B cell (primary cell): ENCODE measurements at regions of chr17 and their contacts with region 1.

Region 1: GRCh38 chr17:75289115-75289831 is at the start of gene SLC25A19:
- DNase-seq: peak; percentile 98
- ATAC-seq: peak; percentile 84
- H3K4me3 ChIP-seq: peak within 1 kb of the TSS; percentile 77 to 88 (median 85)
- H3K4me3 Mint-ChIP-seq: peak within 1 kb of the TSS; percentile 98
- H3K27ac ChIP-seq: peak within 1 kb of the TSS; percentile 90 to 98
- H3K27ac Mint-ChIP-seq: peak within 1 kb of the TSS; percentile 100
- H3K4me1 ChIP-seq: peaks cover 23 to 44% of the 10 kb centered on the region in 2 donors
- H3K4me1 Mint-ChIP-seq: peaks cover 37% of the 10 kb centered on the region
- H3K27me3 ChIP-seq: no peaks in the 10 kb centered on the region
- H3K27me3 Mint-ChIP-seq: no peaks in the 10 kb centered on the region
- CTCF ChIP-seq: no peak
- total RNA-seq, gene SLC25A19: 46.4 and 52.3 TPM in 2 replicates

Region 2: GRCh38 chr17:75313941-75314551 is 24.8 kb after region 1 on chr17:
- CTCF ChIA-PET with region 1: interaction called, 79 read pairs
- POLR2A ChIA-PET with region 1: interaction called, 25 read pairs
- intact Hi-C with region 1: no loop called
- DNase-seq: no peak
- ATAC-seq: no peak
- H3K4me3 ChIP-seq: no peak overlapping the region
- H3K4me3 Mint-ChIP-seq: peak overlapping the region; percentile 27
- H3K27ac ChIP-seq: peak overlapping the region; percentile 18 to 60
- H3K27ac Mint-ChIP-seq: peak overlapping the region; percentile 91
- H3K4me1 ChIP-seq: peaks cover 26 to 68% of the 10 kb centered on the region in 2 donors
- H3K4me1 Mint-ChIP-seq: peaks cover 52% of the 10 kb centered on the region
- H3K27me3 ChIP-seq: no peaks in the 10 kb centered on the region
- H3K27me3 Mint-ChIP-seq: no peaks in the 10 kb centered on the region
- CTCF ChIP-seq: no peak

Region 3: GRCh38 chr17:75393523-75394331 is 104.5 kb after region 1 on chr17:
- CTCF ChIA-PET with region 1: interaction called, 25 read pairs
- POLR2A ChIA-PET with region 1: interaction called, 13 read pairs
- intact Hi-C with region 1: no loop called
- DNase-seq: peak; percentile 94
- ATAC-seq: peak; percentile 95
- H3K4me3 ChIP-seq: peak overlapping the region; percentile 49 to 78 (median 63)
- H3K4me3 Mint-ChIP-seq: peak overlapping the region; percentile 86
- H3K27ac ChIP-seq: peak overlapping the region; percentile 17 to 79
- H3K27ac Mint-ChIP-seq: peak overlapping the region; percentile 79
- H3K4me1 ChIP-seq: peaks cover 68 to 76% of the 10 kb centered on the region in 2 donors
- H3K4me1 Mint-ChIP-seq: peaks cover 81% of the 10 kb centered on the region
- H3K27me3 ChIP-seq: no peaks in the 10 kb centered on the region
- H3K27me3 Mint-ChIP-seq: no peaks in the 10 kb centered on the region
- CTCF ChIP-seq: peak; percentile 12

Region 4: GRCh38 chr17:75412455-75413317 is 123.4 kb after region 1 on chr17:
- CTCF ChIA-PET with region 1: interaction called, 76 read pairs
- POLR2A ChIA-PET with region 1: interaction called, 8 read pairs
- intact Hi-C with region 1: loop called (anchors 1 kb)
- DNase-seq: peak; percentile 90
- ATAC-seq: peak; percentile 94
- H3K4me3 ChIP-seq: peak overlapping the region in 4 of 5 experiments; percentile 9 to 30 (median 23)
- H3K4me3 Mint-ChIP-seq: peak overlapping the region; percentile 68
- H3K27ac ChIP-seq: no peak overlapping the region
- H3K27ac Mint-ChIP-seq: peak overlapping the region; percentile 62
- H3K4me1 ChIP-seq: peaks cover 7 to 14% of the 10 kb centered on the region in 2 donors
- H3K4me1 Mint-ChIP-seq: peaks cover 13% of the 10 kb centered on the region
- H3K27me3 ChIP-seq: no peaks in the 10 kb centered on the region
- H3K27me3 Mint-ChIP-seq: no peaks in the 10 kb centered on the region
- CTCF ChIP-seq: peak; percentile 79

Region 5: GRCh38 chr17:75476271-75476671 is 187.0 kb after region 1 on chr17:
- CTCF ChIA-PET with region 1: no interaction called
- POLR2A ChIA-PET with region 1: no interaction called
- intact Hi-C with region 1: no loop called
- DNase-seq: no peak
- ATAC-seq: no peak
- H3K4me3 ChIP-seq: no peak overlapping the region
- H3K4me3 Mint-ChIP-seq: no peak overlapping the region
- H3K27ac ChIP-seq: no peak overlapping the region
- H3K27ac Mint-ChIP-seq: no peak overlapping the region
- H3K4me1 ChIP-seq: no peaks in the 10 kb centered on the region
- H3K4me1 Mint-ChIP-seq: no peaks in the 10 kb centered on the region
- H3K27me3 ChIP-seq: no peaks in the 10 kb centered on the region
- H3K27me3 Mint-ChIP-seq: no peaks in the 10 kb centered on the region
- CTCF ChIP-seq: no peak

Region 6: GRCh38 chr17:75524953-75525719 is 235.9 kb after region 1 on chr17 and contains the start of gene LLGL2:
- CTCF ChIA-PET with region 1: no interaction called
- POLR2A ChIA-PET with region 1: no interaction called
- intact Hi-C with region 1: loop called (anchors 1 kb)
- DNase-seq: peak; percentile 92
- ATAC-seq: peak; percentile 92
- H3K4me3 ChIP-seq: peak within 1 kb of the TSS; percentile 35 to 80 (median 74)
- H3K4me3 Mint-ChIP-seq: peak within 1 kb of the TSS; percentile 89
- H3K27ac ChIP-seq: peak within 1 kb of the TSS in 1 of 2 donors; percentile 24
- H3K27ac Mint-ChIP-seq: no peak within 1 kb of the TSS
- H3K4me1 ChIP-seq: peaks cover 15 to 18% of the 10 kb centered on the region in 2 donors
- H3K4me1 Mint-ChIP-seq: peaks cover 14% of the 10 kb centered on the region
- H3K27me3 ChIP-seq: peaks cover 0 to 7% (median 0%) of the 10 kb centered on the region in 4 experiments
- H3K27me3 Mint-ChIP-seq: no peaks in the 10 kb centered on the region
- CTCF ChIP-seq: peak; percentile 47
- total RNA-seq, gene LLGL2: 39.7 and 40.6 TPM in 2 replicates

Region 7: DNA sequence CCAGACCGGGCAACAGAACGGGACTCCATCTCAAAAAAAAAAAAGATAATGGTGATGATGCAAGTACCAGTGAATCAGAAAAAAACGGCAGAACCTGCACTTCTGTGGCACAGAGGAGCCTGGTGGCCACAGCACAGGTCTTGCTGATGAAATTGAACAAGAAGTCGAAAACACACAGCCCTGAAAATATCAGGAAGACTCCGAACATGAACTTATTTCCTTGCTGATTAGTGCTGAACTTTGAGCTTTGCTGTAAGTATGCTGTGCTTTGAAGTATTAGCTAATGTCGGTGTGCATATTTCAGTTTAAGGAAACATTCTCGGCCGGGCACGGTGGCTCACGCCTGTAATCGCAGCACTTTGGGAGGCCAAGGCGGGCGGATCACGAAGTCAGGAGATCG is 287.4 kb after region 1 on chr17:
- CTCF ChIA-PET with region 1: no interaction called
- POLR2A ChIA-PET with region 1: no interaction called
- intact Hi-C with region 1: no loop called
- DNase-seq: no peak
- ATAC-seq: no peak
- H3K4me3 ChIP-seq: no peak overlapping the region
- H3K4me3 Mint-ChIP-seq: no peak overlapping the region
- H3K27ac ChIP-seq: no peak overlapping the region
- H3K27ac Mint-ChIP-seq: no peak overlapping the region
- H3K4me1 ChIP-seq: peaks cover 2 to 8% of the 10 kb centered on the region in 2 donors
- H3K4me1 Mint-ChIP-seq: peaks cover 2% of the 10 kb centered on the region
- H3K27me3 ChIP-seq: peaks cover 0 to 5% (median 2%) of the 10 kb centered on the region in 4 experiments
- H3K27me3 Mint-ChIP-seq: no peaks in the 10 kb centered on the region
- CTCF ChIP-seq: no peak